ENCODE measurements at regions of chr14 and their contacts with region 1.

Region 1: DNA sequence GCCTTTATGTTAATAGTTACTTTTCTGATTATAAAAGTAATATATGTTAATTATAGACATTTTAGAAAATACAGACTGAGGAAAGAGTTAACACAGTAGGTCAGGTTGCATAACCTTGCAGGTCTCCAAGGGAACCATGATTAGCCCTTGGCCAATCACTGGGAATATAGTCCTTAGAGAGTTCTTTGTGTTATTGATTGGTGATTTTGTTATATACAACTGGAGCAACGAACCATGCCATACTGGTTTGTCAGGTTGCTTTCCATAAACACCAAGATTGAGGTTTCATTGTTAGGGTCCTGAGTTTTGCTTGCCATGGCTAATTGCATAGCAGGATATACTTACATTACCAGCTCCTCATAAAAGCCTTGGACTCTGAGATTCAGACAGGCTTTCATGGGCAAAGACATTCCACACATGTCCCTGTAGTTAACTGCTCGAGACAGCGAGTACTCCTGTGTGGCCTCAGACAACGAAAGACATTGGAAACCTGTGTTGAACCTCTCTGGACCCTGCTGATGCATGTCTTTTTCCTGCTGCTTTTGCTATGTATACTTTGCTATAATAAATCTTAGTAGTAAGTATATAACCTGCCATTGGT is 33.7 kb downstream of the MAPK1IP1L start:
- DNase-seq: peak in 1 of 9 experiments; percentile 5
- ATAC-seq: no peak
- H3K4me3 ChIP-seq: no peak overlapping the region
- H3K4me3 Mint-ChIP-seq: no peak overlapping the region
- H3K27ac ChIP-seq: no peak overlapping the region
- H3K27ac Mint-ChIP-seq: no peak overlapping the region
- H3K4me1 ChIP-seq: no peaks in the 10 kb centered on the region
- H3K4me1 Mint-ChIP-seq: peaks cover 3% of the 10 kb centered on the region
- H3K27me3 ChIP-seq: no peaks in the 10 kb centered on the region
- H3K27me3 Mint-ChIP-seq: no peaks in the 10 kb centered on the region
- CTCF ChIP-seq: no peak

Region 2: DNA sequence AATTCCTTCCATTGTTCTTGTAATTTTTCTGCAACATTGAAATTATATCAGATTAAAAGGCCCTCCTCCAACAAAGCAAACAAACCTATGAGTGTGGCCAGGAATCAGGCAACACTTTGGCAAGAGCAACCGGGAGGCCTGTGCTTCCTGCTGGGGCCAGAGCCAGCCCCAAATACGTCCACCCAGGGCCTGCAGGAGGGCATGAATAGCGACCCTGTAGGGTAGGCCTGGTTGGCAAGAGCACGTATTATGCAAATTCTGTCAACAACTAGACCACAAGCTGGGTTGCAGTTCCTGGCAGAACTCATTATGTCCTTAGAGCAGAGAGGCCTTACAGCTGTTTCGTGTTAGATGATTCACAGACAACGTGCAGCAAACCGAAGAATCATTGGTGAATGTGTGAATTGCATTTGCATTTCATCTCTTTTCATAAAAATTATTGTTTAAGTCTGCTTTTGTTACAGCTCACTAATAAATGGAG is 17.0 kb after region 1 on chr14:
- CTCF ChIA-PET with region 1: interaction called, 16 read pairs
- POLR2A ChIA-PET with region 1: interaction called, 4 read pairs
- intact Hi-C with region 1: loop called in 1 of 2 experiments (anchors 2 kb)
- DNase-seq: peak in 8 of 9 experiments; percentile 25 to 82 (median 58)
- ATAC-seq: peak; percentile 74
- H3K4me3 ChIP-seq: no peak overlapping the region
- H3K4me3 Mint-ChIP-seq: no peak overlapping the region
- H3K27ac ChIP-seq: peak overlapping the region; percentile 18 to 81
- H3K27ac Mint-ChIP-seq: peak overlapping the region; percentile 96
- H3K4me1 ChIP-seq: peaks cover 38% of the 10 kb centered on the region
- H3K4me1 Mint-ChIP-seq: peaks cover 50% of the 10 kb centered on the region
- H3K27me3 ChIP-seq: no peaks in the 10 kb centered on the region
- H3K27me3 Mint-ChIP-seq: no peaks in the 10 kb centered on the region
- CTCF ChIP-seq: no peak

Region 3: DNA sequence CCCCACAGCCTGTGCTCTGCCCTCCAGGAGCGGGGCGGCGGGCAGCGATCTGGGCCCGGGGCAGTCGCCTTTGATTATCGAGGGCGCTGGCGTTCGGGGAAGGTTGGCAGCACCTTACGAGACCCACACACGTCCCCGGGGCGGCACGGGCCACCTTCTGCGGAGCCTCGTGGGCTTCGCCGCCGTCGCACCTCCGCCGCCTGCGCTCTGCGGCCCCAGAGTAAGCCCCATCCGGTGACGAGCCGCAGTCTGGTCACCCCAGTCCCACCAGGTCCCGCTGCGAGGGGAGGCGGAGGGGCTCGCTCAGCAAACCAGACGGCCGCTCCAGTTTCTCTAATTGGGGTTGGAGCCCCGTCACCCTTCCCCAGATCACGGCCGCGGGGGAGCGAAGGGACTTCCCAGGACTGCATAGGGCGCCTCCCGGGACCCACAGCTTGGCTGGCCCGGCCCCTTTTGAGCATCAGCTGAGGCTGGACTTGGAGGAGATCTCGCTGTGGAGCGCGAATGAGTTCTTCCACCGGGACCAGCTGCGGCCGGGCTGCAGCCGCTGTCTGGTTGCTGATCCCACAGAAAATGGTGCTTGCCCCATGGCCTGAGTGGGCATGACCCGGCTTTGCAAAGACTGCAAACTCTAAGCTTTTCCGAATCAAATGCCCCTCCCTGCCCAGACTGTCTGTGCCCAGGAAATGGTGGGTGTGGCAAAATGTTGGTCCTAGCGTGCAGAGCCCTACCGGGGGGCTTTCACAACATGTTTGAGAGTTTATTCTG is 44.5 kb after region 1 on chr14:
- CTCF ChIA-PET with region 1: interaction called, 4 read pairs
- POLR2A ChIA-PET with region 1: interaction called, 3 read pairs
- intact Hi-C with region 1: loop called (anchors 2 kb)
- DNase-seq: peak in 8 of 9 experiments; percentile 18 to 76 (median 58)
- ATAC-seq: peak; percentile 70
- H3K4me3 ChIP-seq: peak overlapping the region; percentile 46 to 54
- H3K4me3 Mint-ChIP-seq: peak overlapping the region; percentile 72
- H3K27ac ChIP-seq: no peak overlapping the region
- H3K27ac Mint-ChIP-seq: no peak overlapping the region
- H3K4me1 ChIP-seq: peaks cover 8% of the 10 kb centered on the region
- H3K4me1 Mint-ChIP-seq: peaks cover 25% of the 10 kb centered on the region
- H3K27me3 ChIP-seq: no peaks in the 10 kb centered on the region
- H3K27me3 Mint-ChIP-seq: peaks cover 27% of the 10 kb centered on the region
- CTCF ChIP-seq: no peak

Region 4: DNA sequence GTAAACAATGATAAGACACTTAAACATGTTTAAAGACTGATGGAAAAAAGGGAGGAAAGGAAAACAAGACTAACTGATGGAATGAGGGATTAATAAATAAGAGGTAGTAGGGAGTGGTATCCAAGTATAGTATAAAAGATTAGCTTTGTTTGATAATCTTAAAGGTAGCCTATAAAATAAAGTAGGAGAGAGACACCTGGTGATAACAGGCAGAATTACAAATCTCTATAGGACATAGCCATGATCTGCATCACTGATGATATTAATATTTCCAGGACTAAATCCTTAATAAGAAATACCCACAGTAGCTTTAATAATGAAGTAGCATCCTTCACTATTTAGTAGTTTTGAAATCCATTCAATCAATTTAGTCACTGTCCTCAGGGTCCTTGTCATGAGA is 75.8 kb after region 1 on chr14:
- CTCF ChIA-PET with region 1: interaction called, 109 read pairs
- POLR2A ChIA-PET with region 1: interaction called, 4 read pairs
- intact Hi-C with region 1: loop called (anchors 1 kb)
- DNase-seq: peak in 2 of 9 experiments; percentile 57 to 69
- ATAC-seq: peak; percentile 88
- H3K4me3 ChIP-seq: no peak overlapping the region
- H3K4me3 Mint-ChIP-seq: no peak overlapping the region
- H3K27ac ChIP-seq: no peak overlapping the region
- H3K27ac Mint-ChIP-seq: no peak overlapping the region
- H3K4me1 ChIP-seq: no peaks in the 10 kb centered on the region
- H3K4me1 Mint-ChIP-seq: peaks cover 4% of the 10 kb centered on the region
- H3K27me3 ChIP-seq: no peaks in the 10 kb centered on the region
- H3K27me3 Mint-ChIP-seq: no peaks in the 10 kb centered on the region
- CTCF ChIP-seq: peak; percentile 68

Measured in CD8-positive, alpha-beta T cell (primary cell).